CD14-positive monocyte (primary cell): ENCODE measurements at regions of chr15 and their contacts with region 1.

Region 1: GRCh38 chr15:66966257-66966656 is 99.1 kb upstream of the SMAD3 start:
- DNase-seq: no peak
- H3K4me3 ChIP-seq: no peak overlapping the region
- H3K4me3 Mint-ChIP-seq: no peak overlapping the region
- H3K27ac ChIP-seq: no peak overlapping the region
- H3K27ac Mint-ChIP-seq: no peak overlapping the region
- H3K4me1 ChIP-seq: peaks cover 8 to 11% of the 10 kb centered on the region in 2 donors
- H3K4me1 Mint-ChIP-seq: peaks cover 9% of the 10 kb centered on the region
- H3K27me3 ChIP-seq: no peaks in the 10 kb centered on the region
- H3K27me3 Mint-ChIP-seq: peaks cover 0 to 1% (median 0%) of the 10 kb centered on the region in 3 donors
- CTCF ChIP-seq: no peak

Region 2: DNA sequence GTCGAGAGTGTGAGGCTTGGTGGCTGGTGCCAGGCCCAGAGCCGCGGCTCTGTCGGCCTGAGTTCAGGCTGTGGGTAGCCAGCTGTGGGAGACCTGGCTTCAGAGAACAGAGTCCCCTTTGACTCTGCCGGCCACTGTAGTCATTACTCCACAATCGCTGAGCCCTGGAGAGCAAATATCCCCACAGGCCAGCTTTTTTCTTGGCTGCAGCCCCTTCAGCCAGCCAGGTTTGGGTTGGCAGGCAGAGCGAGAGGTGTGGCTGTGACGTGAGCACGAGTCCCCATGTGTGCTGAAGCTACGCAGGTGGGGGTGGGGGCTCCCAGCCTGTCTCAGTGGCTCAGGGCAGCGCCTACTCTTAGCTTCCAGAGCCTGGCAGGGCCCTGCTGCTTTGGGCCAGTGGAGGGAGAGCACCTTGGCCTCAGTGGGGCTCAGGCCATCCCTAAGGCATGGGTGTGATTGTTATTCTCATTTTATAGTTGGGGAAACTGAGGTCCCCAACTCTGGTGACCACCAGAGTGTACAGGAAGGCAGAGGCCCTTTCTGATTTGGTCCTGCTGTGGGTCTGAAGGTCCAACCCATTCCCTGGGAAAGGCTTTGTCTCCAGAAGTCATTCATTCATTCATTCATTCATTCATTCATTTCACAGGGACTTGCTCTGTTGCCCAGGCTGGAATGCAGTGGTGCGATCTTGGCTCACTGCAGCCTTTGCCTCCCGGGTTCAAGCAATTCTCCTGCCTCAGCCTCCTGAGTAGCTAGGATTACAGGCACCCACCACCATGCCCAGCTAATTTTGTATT is 354.8 kb before region 1 on chr15:
- intact Hi-C with region 1: no loop called
- DNase-seq: no peak
- H3K4me3 ChIP-seq: no peak overlapping the region
- H3K4me3 Mint-ChIP-seq: no peak overlapping the region
- H3K27ac ChIP-seq: no peak overlapping the region
- H3K27ac Mint-ChIP-seq: no peak overlapping the region
- H3K4me1 ChIP-seq: peaks cover 34 to 37% of the 10 kb centered on the region in 2 donors
- H3K4me1 Mint-ChIP-seq: peaks cover 37% of the 10 kb centered on the region
- H3K27me3 ChIP-seq: no peaks in the 10 kb centered on the region
- H3K27me3 Mint-ChIP-seq: no peaks in the 10 kb centered on the region
- CTCF ChIP-seq: no peak

Region 3: GRCh38 chr15:66986951-66987350 is 20.7 kb after region 1 on chr15:
- intact Hi-C with region 1: no loop called
- DNase-seq: no peak
- H3K4me3 ChIP-seq: no peak overlapping the region
- H3K4me3 Mint-ChIP-seq: no peak overlapping the region
- H3K27ac ChIP-seq: no peak overlapping the region
- H3K27ac Mint-ChIP-seq: no peak overlapping the region
- H3K4me1 ChIP-seq: no peaks in the 10 kb centered on the region
- H3K4me1 Mint-ChIP-seq: no peaks in the 10 kb centered on the region
- H3K27me3 ChIP-seq: no peaks in the 10 kb centered on the region
- H3K27me3 Mint-ChIP-seq: peaks cover 3 to 5% (median 3%) of the 10 kb centered on the region in 3 donors
- CTCF ChIP-seq: no peak

Region 4: GRCh38 chr15:67003586-67003985 is 37.3 kb after region 1 on chr15:
- intact Hi-C with region 1: loop called in 1 of 2 experiments (anchors 5 kb)
- DNase-seq: no peak
- H3K4me3 ChIP-seq: no peak overlapping the region
- H3K4me3 Mint-ChIP-seq: no peak overlapping the region
- H3K27ac ChIP-seq: no peak overlapping the region
- H3K27ac Mint-ChIP-seq: peak overlapping the region in 2 of 7 donors; percentile 3 to 23
- H3K4me1 ChIP-seq: peaks cover 26 to 36% of the 10 kb centered on the region in 2 donors
- H3K4me1 Mint-ChIP-seq: peaks cover 36% of the 10 kb centered on the region
- H3K27me3 ChIP-seq: no peaks in the 10 kb centered on the region
- H3K27me3 Mint-ChIP-seq: peaks cover 0 to 3% (median 2%) of the 10 kb centered on the region in 3 donors
- CTCF ChIP-seq: no peak

Region 5: GRCh38 chr15:67043939-67044771 is 77.9 kb after region 1 on chr15:
- intact Hi-C with region 1: loop called in 1 of 2 experiments (anchors 5 kb)
- DNase-seq: peak in 1 of 3 donors; percentile 69
- H3K4me3 ChIP-seq: no peak overlapping the region
- H3K4me3 Mint-ChIP-seq: no peak overlapping the region
- H3K27ac ChIP-seq: no peak overlapping the region
- H3K27ac Mint-ChIP-seq: peak overlapping the region in 1 of 7 donors; percentile 23
- H3K4me1 ChIP-seq: peaks cover 16 to 52% of the 10 kb centered on the region in 2 donors
- H3K4me1 Mint-ChIP-seq: peaks cover 40% of the 10 kb centered on the region
- H3K27me3 ChIP-seq: no peaks in the 10 kb centered on the region
- H3K27me3 Mint-ChIP-seq: peaks cover 5 to 8% (median 5%) of the 10 kb centered on the region in 3 donors
- CTCF ChIP-seq: no peak